PC-9 (cell line): ENCODE measurements at regions of chr5 and their contacts with region 1.

Region 1: GRCh38 chr5:113047733-113048652 is 71.4 kb downstream of the DCP2 start:
- DNase-seq: peak in 1 of 2 experiments; percentile 29
- H3K4me3 ChIP-seq: no peak overlapping the region
- H3K27ac ChIP-seq: 0 out of 2 replicates have a peak overlapping the region, but pooled peaks have one; percentile 23
- H3K4me1 ChIP-seq: 0 out of 2 replicates have a peak, but pooled peaks cover 4% of the 10 kb centered on the region
- H3K27me3 ChIP-seq: no peaks in the 10 kb centered on the region
- CTCF ChIP-seq: no peak

Region 2: GRCh38 chr5:112878760-112879159 is 169.2 kb before region 1 on chr5:
- CTCF ChIA-PET with region 1: no interaction called
- POLR2A ChIA-PET with region 1: interaction called, 10 read pairs
- intact Hi-C with region 1: no loop called
- DNase-seq: peak; percentile 43 to 90
- H3K4me3 ChIP-seq: no peak overlapping the region; the same call in 1 of the 2 replicates
- H3K27ac ChIP-seq: peak overlapping the region; percentile 48
- H3K4me1 ChIP-seq: peaks cover 26% of the 10 kb centered on the region
- H3K27me3 ChIP-seq: no peaks in the 10 kb centered on the region
- CTCF ChIP-seq: no peak

Region 3: DNA sequence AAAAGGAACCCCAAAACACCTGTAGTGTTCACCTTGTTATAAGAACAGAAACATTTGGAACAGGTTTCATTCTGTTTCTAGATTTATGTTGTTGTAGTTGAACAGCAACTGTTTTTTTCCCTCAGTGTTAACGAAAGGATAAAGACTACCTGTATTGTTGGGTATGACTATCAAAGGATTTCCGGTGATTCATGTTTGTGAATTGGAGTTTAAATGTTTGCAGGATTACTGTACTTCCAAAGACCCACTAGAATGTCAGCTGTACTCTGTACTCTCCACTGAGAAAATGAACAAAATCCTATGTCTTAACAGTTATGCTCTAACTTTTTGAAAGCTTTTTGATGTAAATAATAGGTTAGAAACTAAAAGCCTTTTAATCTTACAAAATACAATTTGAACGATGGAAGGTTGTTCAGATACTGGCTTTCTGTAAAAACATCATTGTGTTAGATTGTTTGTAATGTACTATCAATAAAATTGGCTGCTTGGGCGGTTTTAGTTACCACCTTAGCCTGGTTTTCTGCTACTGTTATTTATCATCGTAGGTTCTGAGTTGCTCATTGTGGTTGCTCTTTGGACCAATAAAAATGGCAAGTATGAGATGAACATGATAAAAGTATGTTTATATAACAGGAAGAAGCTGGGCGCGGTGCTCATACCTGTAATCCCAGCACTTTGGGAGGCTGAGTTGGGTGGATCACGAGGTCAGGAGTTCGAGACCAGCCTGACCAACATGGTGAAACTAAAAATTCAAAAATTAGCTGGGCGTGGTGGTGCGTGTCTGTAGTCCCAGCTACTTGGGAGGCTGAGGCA is 27.3 kb before region 1 on chr5:
- CTCF ChIA-PET with region 1: no interaction called
- POLR2A ChIA-PET with region 1: no interaction called
- intact Hi-C with region 1: loop called (anchors 1 kb)
- DNase-seq: no peak
- H3K4me3 ChIP-seq: no peak overlapping the region
- H3K27ac ChIP-seq: no peak overlapping the region
- H3K4me1 ChIP-seq: no peaks in the 10 kb centered on the region
- H3K27me3 ChIP-seq: no peaks in the 10 kb centered on the region
- CTCF ChIP-seq: no peak